ENCODE measurements at regions of chr5 and their contacts with region 1.

Region 1: DNA sequence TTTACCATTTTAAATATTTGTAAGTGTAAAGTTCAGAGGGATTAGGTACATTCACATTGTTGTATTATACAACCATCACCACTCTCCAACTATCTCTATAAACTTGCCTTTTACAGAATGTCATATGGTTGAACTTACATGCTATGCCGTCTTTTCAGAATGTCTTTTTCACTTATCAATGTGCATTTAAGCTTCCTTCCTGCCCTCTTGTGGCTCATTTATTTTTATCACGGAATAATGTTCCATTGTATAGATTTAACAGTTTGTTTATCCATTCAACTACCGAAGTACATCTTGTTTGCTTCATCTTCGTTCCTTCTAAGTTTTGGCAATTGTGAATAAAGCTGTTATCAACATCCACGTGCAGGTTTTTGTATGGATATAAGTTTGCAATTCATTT is 133.3 kb upstream of the C6 start:
- DNase-seq: no peak
- ATAC-seq: no peak
- H3K4me3 ChIP-seq: no peak overlapping the region
- H3K27ac ChIP-seq: no peak overlapping the region
- H3K4me1 ChIP-seq: peaks cover 0 to 59% (median 18%) of the 10 kb centered on the region in 9 donors
- H3K27me3 ChIP-seq: no peaks in the 10 kb centered on the region
- CTCF ChIP-seq: no peak

Region 2: GRCh38 chr5:40991168-40991980 is 355.2 kb before region 1 on chr5:
- intact Hi-C with region 1: loop called in 1 of 10 experiments (anchors 10 kb)
- DNase-seq: peak in 1 of 2 donors; percentile 70
- ATAC-seq: peak; percentile 83 to 96 (median 94)
- H3K4me3 ChIP-seq: no peak overlapping the region
- H3K27ac ChIP-seq: peak overlapping the region; percentile 43 to 77 (median 68)
- H3K4me1 ChIP-seq: peaks cover 0 to 28% (median 16%) of the 10 kb centered on the region in 9 donors
- H3K27me3 ChIP-seq: no peaks in the 10 kb centered on the region
- CTCF ChIP-seq: no peak

Region 3: GRCh38 chr5:41161271-41161670 is 185.3 kb before region 1 on chr5:
- intact Hi-C with region 1: no loop called
- DNase-seq: no peak
- ATAC-seq: no peak
- H3K4me3 ChIP-seq: no peak overlapping the region
- H3K27ac ChIP-seq: no peak overlapping the region
- H3K4me1 ChIP-seq: no peaks in the 10 kb centered on the region
- H3K27me3 ChIP-seq: no peaks in the 10 kb centered on the region
- CTCF ChIP-seq: no peak

Measured in heart right ventricle (tissue), 16 donors.